ENCODE measurements at regions of chr2 and their contacts with region 1.

Region 1: DNA sequence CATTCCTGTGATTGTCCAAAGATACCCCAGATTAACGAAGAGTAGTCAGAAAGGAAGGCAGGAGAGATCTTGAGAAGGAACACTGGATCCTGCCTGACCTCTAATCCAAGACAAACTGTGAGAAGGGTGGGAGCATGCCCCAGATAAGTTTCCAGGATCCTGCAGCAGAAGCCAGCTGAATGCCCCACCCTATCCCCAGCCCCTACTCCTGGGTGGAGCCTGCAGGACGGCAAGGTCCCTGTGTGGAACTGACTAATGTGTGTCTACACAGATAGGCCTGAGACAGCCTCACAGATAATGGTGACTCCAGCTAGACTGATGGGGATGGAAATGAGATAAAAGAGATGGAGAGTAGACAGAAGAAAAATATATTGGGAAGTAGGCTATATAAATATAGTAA is 174.3 kb downstream of the PDE1A start:
- DNase-seq: no peak
- ATAC-seq: peak in 1 of 4 donors; percentile 57
- H3K4me3 ChIP-seq: no peak overlapping the region
- H3K27ac ChIP-seq: no peak overlapping the region
- H3K4me1 ChIP-seq: peaks cover 0 to 38% (median 5%) of the 10 kb centered on the region in 12 donors
- H3K27me3 ChIP-seq: no peaks in the 10 kb centered on the region
- CTCF ChIP-seq: no peak
- POLR2A ChIP-seq: no peak

Region 2: DNA sequence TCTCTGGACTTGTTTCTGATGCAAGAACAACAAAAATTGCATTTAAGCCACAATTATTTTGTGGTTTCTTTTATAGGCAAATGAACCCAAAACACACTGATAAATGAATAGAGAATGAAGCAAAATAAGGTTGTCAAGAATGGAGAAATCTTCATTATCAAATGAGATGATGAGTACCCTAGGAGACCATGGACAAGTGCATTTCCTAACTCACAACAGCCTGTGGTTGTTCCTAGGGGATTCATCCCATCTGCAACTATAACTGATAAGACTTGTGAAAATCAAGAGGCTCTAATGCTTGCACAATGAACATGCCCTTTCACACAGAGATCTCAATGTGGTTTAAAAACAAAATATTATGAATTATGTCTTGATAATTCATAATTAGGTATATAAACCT is 14.4 kb after region 1 on chr2:
- intact Hi-C with region 1: loop called in 1 of 10 experiments (anchors 2 kb)
- DNase-seq: no peak
- ATAC-seq: no peak
- H3K4me3 ChIP-seq: no peak overlapping the region
- H3K27ac ChIP-seq: no peak overlapping the region
- H3K4me1 ChIP-seq: peaks cover 0 to 13% (median 0%) of the 10 kb centered on the region in 12 donors
- H3K27me3 ChIP-seq: no peaks in the 10 kb centered on the region
- CTCF ChIP-seq: no peak
- POLR2A ChIP-seq: no peak

Region 3: DNA sequence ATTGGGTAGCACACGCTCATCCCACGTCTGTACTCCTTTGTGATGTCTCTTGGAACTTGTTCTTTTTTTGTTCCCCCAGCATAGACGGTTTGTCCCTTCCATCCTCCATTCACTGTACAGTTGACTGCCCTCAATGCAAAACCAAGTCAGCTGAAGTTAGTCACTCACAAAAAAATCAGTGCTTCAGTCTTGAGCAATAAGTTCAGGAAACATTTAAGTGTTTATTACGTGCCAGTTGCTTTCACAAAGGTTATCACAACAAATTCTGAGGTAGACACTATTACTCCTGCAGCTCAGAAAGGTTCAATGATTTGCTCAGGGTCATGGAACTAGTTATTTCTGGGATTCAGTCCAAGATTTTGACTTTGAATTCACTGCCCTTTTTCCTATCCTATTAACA is 72.1 kb after region 1 on chr2:
- intact Hi-C with region 1: no loop called
- DNase-seq: no peak
- ATAC-seq: peak in 2 of 4 donors; percentile 47 to 69
- H3K4me3 ChIP-seq: no peak overlapping the region
- H3K27ac ChIP-seq: no peak overlapping the region
- H3K4me1 ChIP-seq: peaks cover 0 to 19% (median 0%) of the 10 kb centered on the region in 12 donors
- H3K27me3 ChIP-seq: no peaks in the 10 kb centered on the region
- CTCF ChIP-seq: no peak
- POLR2A ChIP-seq: no peak

Measured in heart left ventricle (tissue), 16 donors.